ENCODE measurements at regions of chr11 and their contacts with region 1.

Region 1: DNA sequence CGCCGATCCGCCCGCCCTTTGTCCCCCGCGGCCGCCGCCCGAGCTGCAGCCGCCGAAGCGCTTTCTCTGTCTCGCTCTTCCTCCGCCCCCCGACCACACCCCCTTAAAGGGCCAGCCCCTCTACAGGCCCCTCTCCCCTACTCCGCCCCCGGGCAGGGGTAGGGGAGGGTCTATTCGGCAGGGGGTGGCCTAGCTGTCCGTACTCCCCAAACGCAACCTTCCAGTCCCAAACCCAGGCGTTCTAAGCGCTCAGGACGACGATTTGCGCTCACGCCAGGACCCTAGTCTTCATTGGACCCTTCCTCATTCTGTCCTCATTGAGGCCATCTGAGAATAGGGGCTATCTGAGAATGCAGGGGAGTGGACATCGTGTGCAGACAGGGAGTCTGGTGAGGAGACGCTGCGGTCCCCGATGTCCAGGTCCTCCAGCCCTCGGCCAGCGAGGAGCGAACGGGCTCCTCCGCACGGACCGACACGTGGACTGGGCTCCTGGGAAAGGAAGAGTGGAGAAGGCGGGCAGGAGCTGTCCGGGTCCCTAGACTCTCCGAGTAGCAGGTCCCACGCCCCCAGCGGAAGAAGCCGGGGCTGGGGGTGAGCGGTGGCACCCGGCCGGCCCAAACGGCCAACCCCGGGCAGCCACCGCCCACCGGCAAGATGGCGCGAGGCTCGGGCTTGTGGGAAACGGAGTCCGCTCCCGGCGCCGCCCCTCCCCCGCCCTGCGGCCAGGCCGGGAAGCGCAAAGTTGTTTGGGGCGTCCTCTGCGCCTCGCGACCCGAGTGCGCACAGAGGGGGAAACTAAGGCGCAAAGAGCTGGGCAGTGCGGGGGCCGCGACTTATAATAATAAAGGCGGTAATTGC is at the start of gene PPP1R14B:
- DNase-seq: peak; percentile 84 to 89
- ATAC-seq: peak; percentile 40 to 73
- H3K4me3 ChIP-seq: peak within 1 kb of the TSS; percentile 84
- H3K27ac ChIP-seq: peak within 1 kb of the TSS; percentile 99 to 100
- H3K4me1 ChIP-seq: peaks cover 45% of the 10 kb centered on the region
- CTCF ChIP-seq: no peak
- EP300 ChIP-seq: no peak
- POLR2A ChIP-seq: peak; percentile 14; the same call in 1 of the 2 replicates
- RAD21 ChIP-seq: no peak
- polyA plus RNA-seq, gene PPP1R14B: 129 and 154 TPM in 2 replicates

Region 2: GRCh38 chr11:64204464-64204989 is 42.6 kb before region 1 on chr11:
- CTCF ChIA-PET with region 1: interaction called, 27 read pairs
- POLR2A ChIA-PET with region 1: interaction called, 3 read pairs
- DNase-seq: peak; percentile 89 to 94
- ATAC-seq: peak; percentile 55 to 83
- H3K4me3 ChIP-seq: no peak overlapping the region
- H3K27ac ChIP-seq: no peak overlapping the region
- H3K4me1 ChIP-seq: peaks cover 9% of the 10 kb centered on the region; the same call in 1 of the 3 replicates
- CTCF ChIP-seq: peak; percentile 77
- EP300 ChIP-seq: no peak
- POLR2A ChIP-seq: no peak
- RAD21 ChIP-seq: peak; percentile 62 to 80

Region 3: GRCh38 chr11:64233913-64234834 is 12.9 kb before region 1 on chr11 and contains the start of gene VEGFB:
- CTCF ChIA-PET with region 1: interaction called, 14 read pairs
- POLR2A ChIA-PET with region 1: interaction called, 3 read pairs
- DNase-seq: peak in 1 of 2 experiments; percentile 53
- ATAC-seq: peak; percentile 46 to 64
- H3K4me3 ChIP-seq: peak within 1 kb of the TSS; percentile 96
- H3K27ac ChIP-seq: peak within 1 kb of the TSS; percentile 96 to 97
- H3K4me1 ChIP-seq: peaks cover 40% of the 10 kb centered on the region
- CTCF ChIP-seq: no peak
- EP300 ChIP-seq: no peak
- POLR2A ChIP-seq: no peak
- RAD21 ChIP-seq: no peak
- polyA plus RNA-seq, gene VEGFB: 6.8 and 10.9 TPM in 2 replicates

Region 4: GRCh38 chr11:64276653-64277431 is 29.7 kb after region 1 on chr11:
- CTCF ChIA-PET with region 1: interaction called, 220 read pairs
- POLR2A ChIA-PET with region 1: interaction called, 53 read pairs
- DNase-seq: peak; percentile 44 to 81
- ATAC-seq: peak; percentile 88 to 91
- H3K4me3 ChIP-seq: no peak overlapping the region
- H3K27ac ChIP-seq: peak overlapping the region; percentile 65 to 84
- H3K4me1 ChIP-seq: peaks cover 40% of the 10 kb centered on the region
- CTCF ChIP-seq: no peak
- EP300 ChIP-seq: no peak
- POLR2A ChIP-seq: no peak
- RAD21 ChIP-seq: no peak

Measured in A549 (cell line).